Left cardiac atrium (tissue), 4 donors: ENCODE measurements at regions of chr21 and their contacts with region 1.

Region 1: DNA sequence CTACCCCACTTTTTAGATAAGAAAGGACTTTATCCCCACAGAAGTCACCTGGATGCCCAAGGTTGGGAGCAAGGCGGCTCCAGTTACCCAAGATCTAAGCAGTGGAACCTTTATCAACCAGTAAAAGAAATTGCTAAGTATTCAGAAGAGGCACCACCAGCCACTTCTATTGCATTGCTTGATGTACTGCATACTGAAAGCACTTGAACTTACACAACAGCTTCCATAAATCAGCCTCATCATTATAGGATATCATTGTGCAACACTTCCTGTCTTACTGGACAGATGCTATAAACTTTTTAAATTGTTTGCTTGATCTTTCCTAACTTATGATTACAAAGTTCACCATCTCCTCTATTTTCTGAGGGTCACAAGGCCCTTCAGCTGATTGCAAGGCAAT is 642.7 kb upstream of the CXADR start:
- DNase-seq: no peak
- ATAC-seq: no peak

Region 2: GRCh38 chr21:15080508-15080907 is 1789.6 kb before region 1 on chr21:
- intact Hi-C with region 1: no loop called
- DNase-seq: no peak
- ATAC-seq: no peak

Region 3: GRCh38 chr21:16695074-16695473 is 175.0 kb before region 1 on chr21:
- intact Hi-C with region 1: no loop called
- DNase-seq: no peak
- ATAC-seq: no peak

Region 4: DNA sequence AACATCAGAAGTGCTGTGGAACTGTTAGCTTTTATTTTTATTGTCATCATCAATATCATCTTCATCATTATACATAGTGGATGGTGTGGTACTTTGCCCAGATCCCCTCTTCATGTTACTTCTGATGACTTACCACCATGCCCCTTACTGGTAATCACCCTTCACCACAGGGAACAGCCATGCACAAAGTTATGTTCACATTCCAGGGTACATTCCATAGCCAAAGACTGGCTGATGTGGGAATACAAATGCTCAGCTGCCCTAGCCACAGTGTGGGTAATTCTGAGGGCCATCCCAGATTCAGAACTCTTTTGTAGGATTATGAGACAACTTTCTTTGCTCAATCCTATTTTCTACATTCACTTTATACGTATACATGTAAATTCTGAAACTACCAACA is 48.5 kb before region 1 on chr21:
- intact Hi-C with region 1: loop called in 1 of 2 experiments (anchors 10 kb)
- DNase-seq: no peak
- ATAC-seq: no peak

Region 5: DNA sequence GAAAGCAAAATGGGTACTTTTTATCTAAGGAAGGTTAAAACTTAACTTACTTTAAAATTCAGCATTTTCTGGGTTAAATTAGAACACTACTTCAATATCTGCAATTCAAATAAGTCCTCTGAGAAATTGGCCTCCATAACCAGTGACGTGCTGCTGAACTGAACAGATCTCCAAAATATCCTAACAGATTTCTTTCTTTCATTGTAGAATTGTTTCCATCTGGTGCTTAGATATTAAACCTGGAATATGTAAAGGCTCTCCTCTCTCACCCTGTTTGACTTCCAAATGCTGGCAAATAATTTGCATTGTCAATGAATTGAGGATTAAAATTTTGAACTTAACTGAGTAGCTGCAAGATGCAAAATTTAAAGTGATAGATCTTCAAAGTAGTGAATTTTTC is 325.9 kb after region 1 on chr21:
- intact Hi-C with region 1: no loop called
- DNase-seq: no peak
- ATAC-seq: no peak